Right cardiac atrium (tissue), 5 donors: ENCODE measurements at regions of chr5 and their contacts with region 1.

Region 1: GRCh38 chr5:76601470-76601869 is 21.7 kb downstream of the F2RL2 start:
- DNase-seq: no peak
- ATAC-seq: peak; percentile 64 to 73
- H3K4me3 ChIP-seq: no peak overlapping the region
- H3K27ac ChIP-seq: no peak overlapping the region
- H3K4me1 ChIP-seq: no peaks in the 10 kb centered on the region
- H3K27me3 ChIP-seq: no peaks in the 10 kb centered on the region

Region 2: DNA sequence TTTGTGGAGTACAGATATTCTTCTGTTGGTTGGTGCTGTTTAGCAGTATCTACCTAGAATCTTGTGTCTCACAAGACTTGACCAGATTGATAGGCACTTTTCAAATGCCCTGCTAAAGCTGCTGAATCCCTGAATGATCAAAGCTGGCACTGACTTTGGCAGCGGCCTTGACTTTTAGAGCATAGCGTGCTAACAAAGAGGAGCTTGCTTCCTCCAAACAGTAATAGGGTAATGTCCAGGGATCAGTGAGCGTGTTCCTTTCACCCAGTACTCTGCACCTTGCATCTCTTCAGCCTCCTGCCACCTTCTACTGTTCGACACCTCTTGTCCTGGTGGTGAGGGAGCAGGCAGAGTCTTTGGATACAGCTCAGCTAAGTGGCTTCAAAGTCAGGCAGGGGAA is 97.5 kb before region 1 on chr5:
- intact Hi-C with region 1: no loop called
- DNase-seq: no peak
- ATAC-seq: no peak
- H3K4me3 ChIP-seq: no peak overlapping the region
- H3K27ac ChIP-seq: no peak overlapping the region
- H3K4me1 ChIP-seq: no peaks in the 10 kb centered on the region
- H3K27me3 ChIP-seq: no peaks in the 10 kb centered on the region

Region 3: DNA sequence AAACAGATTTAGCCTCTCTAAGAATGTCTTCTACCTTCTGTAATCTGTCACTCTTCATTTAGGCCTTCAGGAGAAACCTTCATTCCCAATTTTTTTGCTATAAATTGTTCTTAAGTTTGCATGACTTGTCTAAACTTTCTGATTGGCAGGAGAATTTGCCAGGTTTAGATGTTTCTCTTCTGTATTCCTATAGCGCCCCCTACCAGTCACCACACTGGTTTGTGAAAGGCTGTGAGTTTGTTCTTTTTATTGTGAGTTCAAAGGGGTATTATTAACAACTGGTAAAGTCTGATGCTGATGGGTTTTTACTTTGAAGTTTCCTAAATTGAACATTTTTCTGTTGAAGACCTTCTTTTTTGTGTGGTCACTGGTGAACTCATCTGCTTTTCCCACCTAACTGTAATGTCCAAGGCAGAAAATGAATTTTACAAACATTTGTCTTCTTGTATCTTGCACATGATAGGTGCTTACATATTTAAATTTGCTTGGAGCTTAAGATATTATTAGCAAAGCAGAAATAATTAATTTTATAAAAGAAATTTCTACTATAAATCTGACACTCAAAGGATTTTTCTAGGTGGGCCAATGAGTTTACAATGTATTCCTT is 40.1 kb after region 1 on chr5:
- intact Hi-C with region 1: loop called in 1 of 4 experiments (anchors 2 kb)
- DNase-seq: peak; percentile 35 to 73 (median 46)
- ATAC-seq: peak in 1 of 2 donors; percentile 51
- H3K4me3 ChIP-seq: no peak overlapping the region
- H3K27ac ChIP-seq: no peak overlapping the region
- H3K4me1 ChIP-seq: peaks cover 2% of the 10 kb centered on the region
- H3K27me3 ChIP-seq: no peaks in the 10 kb centered on the region

Region 4: DNA sequence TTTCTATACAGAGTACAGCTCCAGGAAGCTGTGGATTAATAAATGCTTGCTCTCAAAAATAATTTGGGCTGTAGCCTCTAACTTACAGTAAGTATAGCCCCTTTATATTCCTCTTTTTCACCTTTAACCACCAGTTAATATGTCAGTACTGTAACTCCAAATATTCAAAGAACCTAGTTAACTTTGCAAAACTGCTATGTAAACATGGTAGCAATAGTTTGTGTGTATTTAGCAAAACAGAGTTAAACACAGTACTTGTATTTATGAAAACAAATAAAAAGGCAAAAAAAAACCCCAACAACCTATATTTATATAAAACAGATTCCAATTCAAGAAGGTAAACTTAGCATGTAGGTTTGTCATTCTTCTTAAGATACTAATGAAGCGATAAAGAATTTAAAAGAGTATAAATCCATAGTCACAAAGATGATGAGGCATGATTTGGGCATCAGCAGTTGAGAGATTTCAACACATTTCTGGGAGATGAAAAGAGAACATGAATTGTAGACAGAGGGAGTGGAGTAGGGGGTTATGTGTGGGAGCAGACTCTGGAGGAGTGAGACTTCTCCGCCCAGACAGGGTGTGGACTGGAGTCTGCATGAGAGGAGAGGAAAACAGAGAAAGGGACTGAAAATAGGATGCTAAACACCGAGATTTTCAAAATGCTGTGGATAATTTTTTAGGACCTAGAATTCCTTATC is 170.4 kb after region 1 on chr5:
- intact Hi-C with region 1: loop called (anchors 5 to 10 kb)
- DNase-seq: no peak
- ATAC-seq: no peak
- H3K4me3 ChIP-seq: no peak overlapping the region
- H3K27ac ChIP-seq: no peak overlapping the region
- H3K4me1 ChIP-seq: no peaks in the 10 kb centered on the region
- H3K27me3 ChIP-seq: no peaks in the 10 kb centered on the region